H1 (cell line): ENCODE measurements at regions of chr3 and their contacts with region 1.

Region 1: GRCh38 chr3:9731206-9732079 is at the start of gene BRPF1:
- DNase-seq: peak; percentile 96 to 97
- H3K4me3 ChIP-seq: peak within 1 kb of the TSS; percentile 87 to 94 (median 90)
- H3K27ac ChIP-seq: peak within 1 kb of the TSS; percentile 100
- H3K4me1 ChIP-seq: peaks cover 0 to 8% (median 6%) of the 10 kb centered on the region in 4 experiments; a peak in 6 of 7 replicates
- H3K27me3 ChIP-seq: no peaks in the 10 kb centered on the region
- CTCF ChIP-seq: no peak
- EP300 ChIP-seq: peak in 1 of 2 experiments; percentile 94; a peak in 2 of 3 replicates
- POLR2A ChIP-seq: peak in 1 of 2 experiments; percentile 76; a peak in 2 of 3 replicates
- RAD21 ChIP-seq: no peak
- total RNA-seq, gene BRPF1: 21.7 and 27.7 TPM in 2 replicates

Region 2: DNA sequence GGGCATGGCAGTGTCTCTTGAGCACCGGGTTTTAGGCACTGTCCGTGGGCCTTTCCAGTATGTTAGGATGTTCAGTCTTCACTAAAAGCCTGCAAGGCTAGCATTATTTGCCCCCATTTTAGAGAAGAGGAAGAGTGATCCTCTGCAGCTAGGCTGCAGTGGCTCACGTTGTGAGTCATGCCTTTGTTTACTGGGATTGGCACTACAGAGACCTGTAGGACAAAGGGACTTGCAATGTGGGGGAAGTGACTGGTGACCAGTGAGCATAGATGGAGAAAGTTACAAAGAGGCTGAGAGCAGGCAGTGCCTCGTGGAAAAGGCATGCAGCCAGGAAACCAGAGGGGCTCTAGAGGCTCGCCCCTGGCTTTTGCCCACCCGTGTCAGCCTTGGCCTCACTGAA is 54.7 kb before region 1 on chr3:
- CTCF ChIA-PET with region 1: interaction called, 12 read pairs
- POLR2A ChIA-PET with region 1: no interaction called
- DNase-seq: no peak
- H3K4me3 ChIP-seq: no peak overlapping the region
- H3K27ac ChIP-seq: no peak overlapping the region
- H3K4me1 ChIP-seq: no peaks in the 10 kb centered on the region
- H3K27me3 ChIP-seq: no peaks in the 10 kb centered on the region
- CTCF ChIP-seq: no peak
- EP300 ChIP-seq: no peak
- POLR2A ChIP-seq: no peak
- RAD21 ChIP-seq: no peak

Region 3: DNA sequence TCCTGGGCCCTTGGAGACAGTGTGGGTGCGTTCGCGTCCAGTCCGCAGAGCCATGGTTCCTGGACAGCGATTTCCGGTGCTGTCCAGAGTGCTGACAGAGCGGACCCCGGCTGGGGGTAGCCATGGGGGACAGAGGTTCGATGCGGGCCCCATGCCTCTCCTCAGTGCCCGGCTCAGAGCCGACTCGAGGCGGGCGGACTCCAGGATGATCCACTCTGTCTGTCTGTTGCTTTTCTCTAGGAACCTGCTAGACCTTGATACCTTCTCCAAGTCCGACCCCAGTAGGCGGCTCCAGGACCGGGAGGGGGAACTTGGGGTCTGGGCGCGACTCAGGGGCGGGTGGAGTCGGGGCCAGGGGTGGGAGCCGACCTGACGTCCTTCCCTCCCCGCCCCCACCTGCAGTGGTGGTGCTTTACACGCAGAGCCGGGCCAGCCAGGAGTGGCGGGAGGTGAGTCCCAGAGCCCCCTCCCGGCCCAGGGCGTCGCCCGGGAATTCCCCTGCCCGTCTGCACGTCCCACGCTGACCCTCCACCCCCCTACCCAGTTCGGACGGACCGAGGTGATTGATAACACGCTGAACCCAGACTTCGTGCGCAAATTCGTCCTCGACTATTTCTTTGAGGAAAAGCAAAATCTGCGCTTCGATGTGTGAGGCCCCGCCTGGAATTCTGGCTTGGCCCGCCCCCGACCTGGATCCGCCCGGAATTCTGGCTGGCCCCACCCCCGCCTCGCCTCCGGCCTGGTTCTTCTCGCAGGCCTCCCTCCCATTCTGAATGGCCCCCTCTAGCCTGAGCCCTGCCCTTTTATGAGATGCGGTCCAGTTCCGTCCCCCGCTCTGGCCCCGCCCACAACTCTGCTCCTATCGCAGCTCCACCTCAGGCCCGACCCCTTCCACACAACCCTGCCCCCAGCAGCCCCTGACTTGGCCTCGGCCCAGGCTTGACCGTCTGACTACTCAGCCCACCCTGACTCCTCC is 26.8 kb before region 1 on chr3:
- CTCF ChIA-PET with region 1: interaction called, 43 read pairs
- POLR2A ChIA-PET with region 1: interaction called, 7 read pairs
- DNase-seq: peak; percentile 90 to 96
- H3K4me3 ChIP-seq: peak overlapping the region; percentile 55 to 66 (median 60); a peak in 7 of 8 replicates
- H3K27ac ChIP-seq: no peak overlapping the region
- H3K4me1 ChIP-seq: peaks cover 0 to 9% (median 5%) of the 10 kb centered on the region in 4 experiments; a peak in 5 of 7 replicates
- H3K27me3 ChIP-seq: peaks cover 0 to 23% (median 11%) of the 10 kb centered on the region in 4 experiments; a peak in 5 of 7 replicates
- CTCF ChIP-seq: no peak
- EP300 ChIP-seq: no peak; a peak in 1 of 3 replicates
- POLR2A ChIP-seq: peak in 1 of 2 experiments; percentile 37; a peak in 2 of 3 replicates
- RAD21 ChIP-seq: no peak

Region 4: DNA sequence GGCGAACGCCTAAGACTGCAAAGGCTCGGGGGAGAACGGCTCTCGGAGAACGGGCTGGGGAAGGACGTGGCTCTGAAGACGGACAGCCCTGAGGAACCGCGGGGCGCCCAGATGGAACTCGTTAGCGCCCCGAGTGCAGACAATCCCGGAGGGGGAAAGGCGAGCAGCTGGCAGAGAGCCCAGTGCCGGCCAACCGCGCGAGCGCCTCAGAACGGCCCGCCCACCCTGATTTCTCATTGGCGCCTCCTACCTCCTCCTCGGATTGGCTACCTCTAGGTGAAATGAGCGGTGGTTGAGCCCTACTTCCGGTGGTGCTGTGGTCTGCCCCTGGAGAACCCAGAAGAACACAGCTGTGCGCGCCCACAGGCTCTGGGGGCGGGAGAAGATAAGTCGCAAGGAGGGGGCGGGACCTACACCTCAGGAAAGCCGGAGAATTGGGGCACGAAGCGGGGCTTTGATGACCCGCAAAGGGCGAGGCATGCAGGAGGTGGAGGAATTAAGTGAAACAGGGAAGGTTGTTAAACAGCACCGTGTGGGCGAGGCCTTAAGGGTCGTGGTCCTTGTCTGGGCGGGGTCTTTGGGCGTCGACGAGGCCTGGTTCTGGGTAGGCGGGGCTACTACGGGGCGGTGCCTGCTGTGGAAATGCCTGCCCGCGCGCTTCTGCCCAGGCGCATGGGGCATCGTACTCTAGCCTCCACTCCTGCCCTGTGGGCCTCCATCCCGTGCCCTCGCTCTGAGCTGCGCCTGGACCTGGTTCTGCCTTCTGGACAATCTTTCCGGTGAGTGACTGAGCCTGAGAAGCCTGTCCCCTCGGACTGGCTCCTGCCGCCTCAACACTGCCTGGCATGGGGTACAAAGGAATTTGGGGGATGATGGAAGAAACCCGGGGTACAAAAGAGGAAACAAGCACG is 18.5 kb after region 1 on chr3 and contains the start of gene OGG1:
- CTCF ChIA-PET with region 1: interaction called, 11 read pairs
- POLR2A ChIA-PET with region 1: interaction called, 60 read pairs
- DNase-seq: peak; percentile 91 to 93
- H3K4me3 ChIP-seq: peak within 1 kb of the TSS; percentile 73 to 92 (median 88)
- H3K27ac ChIP-seq: peak within 1 kb of the TSS; percentile 88
- H3K4me1 ChIP-seq: peaks cover 0 to 9% (median 6%) of the 10 kb centered on the region in 4 experiments; a peak in 4 of 7 replicates
- H3K27me3 ChIP-seq: no peaks in the 10 kb centered on the region
- CTCF ChIP-seq: peak in 1 of 3 experiments; percentile 1; a peak in 1 of 4 replicates
- EP300 ChIP-seq: no peak
- POLR2A ChIP-seq: peak in 1 of 2 experiments; percentile 82; a peak in 2 of 3 replicates
- RAD21 ChIP-seq: 0 out of 4 replicates have a peak, but pooled peaks of 1 of the 2 experiments have one; percentile 3
- total RNA-seq, gene OGG1: 29.6 and 31.2 TPM in 2 replicates

Region 5: DNA sequence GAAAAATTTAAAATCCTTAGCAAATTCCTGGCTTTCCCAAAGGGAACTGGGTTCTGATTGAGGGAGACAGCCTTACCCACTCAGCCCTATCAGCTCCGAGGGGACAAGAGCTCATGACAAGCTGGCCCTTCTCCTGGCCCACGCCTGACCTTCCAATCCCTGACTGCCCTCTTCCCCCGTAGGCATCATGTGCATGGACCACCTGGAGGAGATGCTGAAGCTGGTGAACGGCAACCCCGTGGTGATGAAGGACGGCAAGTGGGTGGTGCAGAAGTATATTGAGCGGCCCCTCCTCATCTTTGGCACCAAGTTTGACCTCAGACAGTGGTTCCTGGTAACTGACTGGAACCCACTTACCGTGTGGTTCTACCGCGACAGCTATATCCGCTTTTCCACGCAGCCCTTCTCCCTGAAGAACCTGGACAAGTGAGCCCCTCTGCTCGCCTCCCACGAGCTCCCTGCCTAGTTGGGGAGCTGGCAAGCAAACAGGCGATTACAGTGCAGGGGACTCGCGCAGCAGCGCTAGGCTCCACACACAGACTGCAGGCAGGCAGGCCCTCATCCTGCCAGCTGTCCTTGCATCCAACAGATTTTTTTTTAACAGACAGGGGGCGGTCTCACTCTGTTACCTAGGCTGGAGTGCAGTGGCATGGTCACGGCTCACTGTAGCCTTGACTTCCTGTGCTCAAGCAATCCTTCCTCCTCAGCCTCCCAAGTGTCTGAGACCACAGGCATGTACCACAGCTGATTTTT is 95.5 kb after region 1 on chr3:
- CTCF ChIA-PET with region 1: no interaction called
- POLR2A ChIA-PET with region 1: no interaction called
- DNase-seq: peak in 1 of 2 experiments; percentile 74
- H3K4me3 ChIP-seq: no peak overlapping the region
- H3K27ac ChIP-seq: no peak overlapping the region
- H3K4me1 ChIP-seq: peaks cover 0 to 5% (median 2%) of the 10 kb centered on the region in 4 experiments; a peak in 2 of 7 replicates
- H3K27me3 ChIP-seq: no peaks in the 10 kb centered on the region; a peak in 1 of 7 replicates
- CTCF ChIP-seq: peak; percentile 55 to 72 (median 72)
- EP300 ChIP-seq: no peak
- POLR2A ChIP-seq: no peak
- RAD21 ChIP-seq: peak; percentile 67 to 76